Ascending aorta (tissue), 2 donors: ENCODE measurements at regions of chr22 and their contacts with region 1.

Region 1: GRCh38 chr22:27919222-27919941 is at the start of gene PITPNB:
- DNase-seq: peak; percentile 85 to 98
- H3K4me3 ChIP-seq: peak within 1 kb of the TSS; percentile 94 to 98
- H3K27ac ChIP-seq: peak within 1 kb of the TSS; percentile 97 to 100
- H3K4me1 ChIP-seq: peaks cover 8 to 39% of the 10 kb centered on the region in 2 donors
- H3K27me3 ChIP-seq: no peaks in the 10 kb centered on the region
- CTCF ChIP-seq: no peak
- total RNA-seq, gene PITPNB: 42.1 TPM

Region 2: DNA sequence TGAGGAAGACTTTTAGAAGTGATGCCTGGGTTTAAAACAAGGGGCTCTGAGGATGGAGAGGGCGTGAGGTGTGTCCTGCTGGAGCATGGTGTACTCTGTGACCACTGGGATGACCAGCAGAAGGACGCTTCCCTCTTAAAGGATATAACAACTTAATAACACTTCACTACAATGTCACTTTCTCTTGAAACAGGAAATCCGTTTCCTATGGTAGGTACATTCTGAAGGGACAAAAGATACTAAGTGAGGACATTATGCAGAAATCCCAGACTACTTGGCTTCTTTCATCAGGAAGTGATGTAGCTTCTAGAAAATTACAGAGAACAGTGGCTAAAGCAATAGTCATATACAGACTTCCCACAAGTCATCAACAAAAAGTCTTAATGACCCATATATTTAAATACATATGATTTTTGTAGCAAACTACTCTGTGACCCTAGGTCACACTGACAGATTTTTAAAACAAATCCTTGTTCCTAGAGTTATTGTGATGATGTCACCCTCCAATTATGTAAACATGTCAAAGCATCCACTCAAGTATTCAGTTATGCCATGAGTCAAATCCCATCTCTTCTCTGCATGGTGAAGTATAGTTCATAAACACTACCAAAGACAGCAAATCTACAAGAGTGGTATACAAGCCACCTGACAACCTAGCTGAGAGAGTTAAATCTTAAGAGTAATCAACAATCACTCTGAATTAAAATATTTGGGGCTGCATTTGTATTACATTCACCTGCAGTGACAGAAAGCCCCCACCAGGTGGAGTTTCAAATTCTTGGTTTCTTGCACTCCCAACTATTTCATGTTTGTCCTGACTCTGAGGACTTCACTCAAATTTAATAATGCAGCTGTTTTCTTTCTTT is 33.2 kb before region 1 on chr22:
- intact Hi-C with region 1: loop called (anchors 2 kb)
- DNase-seq: no peak
- H3K4me3 ChIP-seq: no peak overlapping the region
- H3K27ac ChIP-seq: peak overlapping the region; percentile 39 to 61
- H3K4me1 ChIP-seq: peaks cover 3 to 33% of the 10 kb centered on the region in 2 donors
- H3K27me3 ChIP-seq: no peaks in the 10 kb centered on the region
- CTCF ChIP-seq: peak; percentile 80 to 90 (median 82)

Region 3: GRCh38 chr22:27896245-27896644 is 23.1 kb before region 1 on chr22:
- intact Hi-C with region 1: no loop called
- DNase-seq: no peak
- H3K4me3 ChIP-seq: no peak overlapping the region
- H3K27ac ChIP-seq: no peak overlapping the region
- H3K4me1 ChIP-seq: peaks cover 0 to 14% of the 10 kb centered on the region in 2 donors
- H3K27me3 ChIP-seq: no peaks in the 10 kb centered on the region
- CTCF ChIP-seq: no peak

Region 4: DNA sequence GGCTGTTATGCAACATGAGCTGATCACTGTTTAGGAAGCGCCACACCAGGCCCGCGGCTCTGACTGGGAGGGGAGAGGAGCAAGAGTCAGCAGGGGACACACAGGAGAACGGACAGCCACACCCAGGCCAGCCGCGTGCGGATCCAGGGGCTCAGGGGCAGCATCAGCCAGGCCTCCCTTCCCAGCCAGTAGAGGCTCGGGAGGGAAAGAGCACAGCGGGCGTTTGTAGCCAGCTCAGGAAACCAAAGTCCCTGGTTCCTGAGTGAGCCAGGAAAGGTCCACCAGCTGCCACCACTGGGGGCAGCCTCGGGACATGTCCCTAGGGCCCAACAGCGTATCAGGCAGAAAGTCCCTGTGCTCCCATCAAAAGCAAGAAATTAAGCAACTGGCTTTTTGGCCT is 71.5 kb after region 1 on chr22:
- intact Hi-C with region 1: loop called (anchors 5 kb)
- DNase-seq: peak in 1 of 2 donors; percentile 81
- H3K4me3 ChIP-seq: no peak overlapping the region
- H3K27ac ChIP-seq: peak overlapping the region; percentile 23 to 41
- H3K4me1 ChIP-seq: peaks cover 0 to 3% of the 10 kb centered on the region in 2 donors
- H3K27me3 ChIP-seq: no peaks in the 10 kb centered on the region
- CTCF ChIP-seq: peak; percentile 63 to 66 (median 63)